Ovary (tissue), 10 donors: ENCODE measurements at regions of chr4 and their contacts with region 1.

Region 1: DNA sequence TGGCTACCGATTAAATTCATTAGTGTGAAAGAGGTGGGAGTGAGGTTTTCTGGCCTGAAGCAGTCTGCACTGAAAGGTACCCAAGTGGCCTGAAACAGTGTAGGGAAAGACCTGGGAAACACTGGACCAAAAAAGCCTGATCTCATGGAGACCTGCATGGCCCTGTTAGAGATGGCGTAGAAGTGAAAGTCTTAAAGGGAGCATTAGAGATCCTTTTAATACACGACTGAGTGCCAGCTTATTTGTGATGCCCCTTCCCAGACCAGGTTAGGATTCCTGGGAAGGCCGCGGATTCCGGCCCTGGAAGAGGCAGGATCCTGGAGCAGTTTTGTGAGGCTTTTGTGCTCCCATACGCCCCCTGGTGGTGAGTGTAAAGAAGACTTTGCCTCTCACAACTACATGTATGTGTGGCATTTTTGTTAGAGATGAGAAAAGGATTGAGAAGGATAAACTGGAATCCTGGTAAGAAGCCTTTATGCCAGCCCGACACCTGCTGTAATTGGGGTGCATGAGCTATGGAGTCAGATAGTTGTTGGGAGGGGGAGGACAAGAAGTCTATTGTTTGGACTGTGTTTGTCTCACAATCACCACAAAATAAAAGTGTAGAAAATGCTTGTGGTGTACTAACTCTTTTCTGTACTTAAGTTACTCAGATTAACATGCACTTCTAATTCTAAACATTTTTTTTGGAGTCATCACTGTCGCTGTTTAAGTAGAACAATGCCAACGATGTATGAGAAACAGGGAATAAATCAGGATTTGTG is 54.0 kb downstream of the JADE1 start:
- DNase-seq: peak; percentile 78 to 87 (median 85)
- H3K4me3 ChIP-seq: no peak overlapping the region
- H3K27ac ChIP-seq: no peak overlapping the region
- H3K4me1 ChIP-seq: peaks cover 7% of the 10 kb centered on the region
- H3K27me3 ChIP-seq: no peaks in the 10 kb centered on the region
- CTCF ChIP-seq: peak; percentile 83 to 88 (median 84)
- EP300 ChIP-seq: no peak
- POLR2A ChIP-seq: no peak

Region 2: GRCh38 chr4:128191115-128191781 is 672.2 kb before region 1 on chr4:
- intact Hi-C with region 1: loop called in 2 of 4 experiments (anchors 10 kb)
- DNase-seq: peak; percentile 47 to 67 (median 56)
- H3K4me3 ChIP-seq: no peak overlapping the region
- H3K27ac ChIP-seq: no peak overlapping the region
- H3K4me1 ChIP-seq: peaks cover 1% of the 10 kb centered on the region
- H3K27me3 ChIP-seq: no peaks in the 10 kb centered on the region
- CTCF ChIP-seq: peak; percentile 59 to 76 (median 69)
- EP300 ChIP-seq: no peak
- POLR2A ChIP-seq: no peak

Region 3: GRCh38 chr4:128454281-128455075 is 409.0 kb before region 1 on chr4:
- intact Hi-C with region 1: loop called (anchors 5 to 10 kb)
- DNase-seq: peak; percentile 83 to 93 (median 84)
- H3K4me3 ChIP-seq: no peak overlapping the region
- H3K27ac ChIP-seq: no peak overlapping the region
- H3K4me1 ChIP-seq: no peaks in the 10 kb centered on the region
- H3K27me3 ChIP-seq: no peaks in the 10 kb centered on the region
- CTCF ChIP-seq: peak; percentile 56 to 83 (median 80)
- EP300 ChIP-seq: no peak
- POLR2A ChIP-seq: no peak

Region 4: GRCh38 chr4:128565565-128566186 is 297.8 kb before region 1 on chr4:
- intact Hi-C with region 1: loop called in 2 of 4 experiments (anchors 2 to 10 kb)
- DNase-seq: peak; percentile 49 to 70 (median 65)
- H3K4me3 ChIP-seq: no peak overlapping the region
- H3K27ac ChIP-seq: no peak overlapping the region
- H3K4me1 ChIP-seq: peaks cover 5% of the 10 kb centered on the region
- H3K27me3 ChIP-seq: no peaks in the 10 kb centered on the region
- CTCF ChIP-seq: peak in 2 of 3 donors; percentile 43 to 48
- EP300 ChIP-seq: no peak
- POLR2A ChIP-seq: no peak

Region 5: DNA sequence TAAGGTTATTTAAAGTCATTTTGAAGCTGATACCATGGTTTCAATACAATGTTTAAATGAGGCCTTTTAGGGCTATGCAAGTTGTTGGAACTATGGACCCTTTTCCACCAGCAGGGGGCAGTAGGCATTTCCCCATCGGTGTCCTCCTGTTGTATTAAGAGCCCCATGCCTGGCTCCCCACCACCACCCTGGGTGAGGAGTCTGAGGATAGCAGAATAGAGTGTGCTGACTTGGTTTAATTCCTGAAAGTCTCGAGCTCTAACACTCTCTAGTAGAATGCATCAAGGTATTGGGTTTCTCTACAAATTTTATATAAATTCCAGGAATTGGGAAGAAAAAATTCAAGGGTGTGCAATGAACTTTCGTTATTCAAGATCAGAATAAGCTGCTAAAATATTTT is 288.8 kb before region 1 on chr4:
- intact Hi-C with region 1: loop called in 1 of 4 experiments (anchors 10 kb)
- DNase-seq: peak; percentile 36 to 79 (median 54)
- H3K4me3 ChIP-seq: no peak overlapping the region
- H3K27ac ChIP-seq: no peak overlapping the region
- H3K4me1 ChIP-seq: peaks cover 10% of the 10 kb centered on the region
- H3K27me3 ChIP-seq: no peaks in the 10 kb centered on the region
- CTCF ChIP-seq: peak in 1 of 3 donors; percentile 29
- EP300 ChIP-seq: no peak
- POLR2A ChIP-seq: no peak

Region 6: DNA sequence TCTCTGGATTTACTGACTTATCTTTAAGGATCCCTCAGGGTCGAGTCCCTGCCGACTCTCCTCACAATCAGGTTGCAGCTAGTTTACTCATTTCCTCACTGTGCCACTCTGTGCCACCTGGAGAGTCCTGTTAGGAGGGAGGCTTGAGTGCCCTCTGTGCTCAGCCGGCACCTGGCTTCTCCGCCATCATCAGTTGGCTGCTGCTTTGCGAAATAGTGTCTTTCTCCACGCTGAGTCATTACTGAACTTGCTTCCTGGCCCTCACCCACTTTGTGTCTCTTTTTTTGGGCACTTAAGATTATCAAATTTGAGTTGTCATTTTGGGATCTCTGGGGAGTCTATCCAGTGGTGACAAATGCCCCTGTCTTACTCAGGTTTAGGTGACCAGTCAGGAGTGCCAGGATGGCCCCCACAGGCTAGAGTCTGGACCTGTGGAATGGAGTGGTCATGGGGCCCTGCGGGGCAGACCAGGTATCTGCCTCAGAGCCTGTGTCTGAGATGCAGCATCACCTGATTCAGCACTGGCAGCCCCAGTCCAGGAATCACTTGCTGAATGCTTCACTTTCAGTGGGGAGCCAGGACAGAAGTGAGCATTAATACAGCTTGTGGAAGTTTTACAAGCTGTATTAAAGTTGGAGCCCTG is 16.3 kb before region 1 on chr4:
- intact Hi-C with region 1: no loop called
- DNase-seq: no peak
- H3K4me3 ChIP-seq: no peak overlapping the region
- H3K27ac ChIP-seq: no peak overlapping the region
- H3K4me1 ChIP-seq: peaks cover 18% of the 10 kb centered on the region
- H3K27me3 ChIP-seq: no peaks in the 10 kb centered on the region
- CTCF ChIP-seq: no peak
- EP300 ChIP-seq: no peak
- POLR2A ChIP-seq: no peak

Region 7: DNA sequence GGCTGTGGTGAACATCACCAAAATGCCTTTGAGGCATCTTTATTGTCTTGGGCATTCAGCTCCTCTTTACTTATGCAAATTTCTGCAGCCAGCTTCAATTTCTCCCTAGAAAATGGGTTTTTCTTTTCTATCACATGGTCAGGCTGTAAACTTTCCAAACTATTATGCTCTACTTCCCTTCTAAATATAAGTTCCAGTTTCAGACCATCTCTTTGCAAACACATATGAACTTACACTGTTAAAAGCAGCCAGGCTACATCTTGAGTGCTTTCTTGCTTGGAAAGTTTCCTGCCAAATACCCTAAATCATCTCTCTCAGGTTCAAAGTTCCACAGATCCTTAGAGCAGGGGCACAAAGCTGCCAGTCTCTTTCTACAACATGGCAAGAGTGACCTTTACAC is 216.6 kb after region 1 on chr4:
- intact Hi-C with region 1: loop called in 1 of 4 experiments (anchors 5 kb)
- DNase-seq: no peak
- H3K4me3 ChIP-seq: no peak overlapping the region
- H3K27ac ChIP-seq: no peak overlapping the region
- H3K4me1 ChIP-seq: no peaks in the 10 kb centered on the region
- H3K27me3 ChIP-seq: no peaks in the 10 kb centered on the region
- CTCF ChIP-seq: no peak
- EP300 ChIP-seq: no peak
- POLR2A ChIP-seq: no peak